ENCODE measurements at regions of chr9 and their contacts with region 1.

Region 1: GRCh38 chr9:36023260-36024048 is 13.3 kb upstream of the RECK start:
- DNase-seq: peak; percentile 90
- H3K4me3 Mint-ChIP-seq: no peak overlapping the region
- H3K27ac Mint-ChIP-seq: no peak overlapping the region
- H3K4me1 Mint-ChIP-seq: no peaks in the 10 kb centered on the region
- H3K27me3 Mint-ChIP-seq: peaks cover 9% of the 10 kb centered on the region

Region 2: DNA sequence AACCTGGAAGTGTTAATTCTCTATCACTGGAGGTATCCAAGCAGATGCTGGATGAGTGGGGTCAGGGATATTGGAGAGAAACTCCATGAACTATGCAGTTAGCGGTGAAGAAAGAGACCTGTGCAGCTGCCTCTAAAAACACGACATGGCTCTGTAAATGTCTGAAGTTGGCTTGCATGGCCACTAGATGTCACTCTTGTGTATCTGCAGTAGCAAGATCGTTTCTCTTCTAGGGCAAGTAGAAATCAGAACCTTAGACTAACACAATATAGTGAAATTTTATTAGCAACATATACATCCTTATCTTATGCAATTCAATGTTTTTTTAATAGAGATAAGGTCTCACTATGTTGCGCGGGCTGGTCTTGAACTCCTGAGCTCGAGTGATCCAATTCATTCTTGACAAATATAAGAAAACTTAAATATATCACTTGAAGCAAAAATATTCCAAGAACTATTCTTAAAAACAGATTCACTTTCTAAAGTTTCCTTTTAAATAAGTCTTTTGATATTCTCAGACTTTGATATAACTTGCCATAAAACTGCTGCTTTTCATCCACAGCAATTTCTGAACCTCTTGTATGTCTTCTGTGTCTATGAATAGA is 68.4 kb before region 1 on chr9:
- intact Hi-C with region 1: loop called (anchors 1 kb)
- DNase-seq: peak; percentile 84
- H3K4me3 Mint-ChIP-seq: no peak overlapping the region
- H3K27ac Mint-ChIP-seq: no peak overlapping the region
- H3K4me1 Mint-ChIP-seq: no peaks in the 10 kb centered on the region
- H3K27me3 Mint-ChIP-seq: peaks cover 21% of the 10 kb centered on the region

Measured in activated CD4-positive, alpha-beta T cell treated with anti-CD3 and anti-CD28 coated beads, Interleukin-2, amount 10 ng/mL, durations not matched to agents 24 days and 14 days (primary cell).